Calu3 (cell line): ENCODE measurements at regions of chr12 and their contacts with region 1.

Region 1: GRCh38 chr12:78916845-78917480 is 52.4 kb downstream of the SYT1 start:
- DNase-seq: peak; percentile 65
- H3K4me3 Mint-ChIP-seq: no peak overlapping the region
- H3K27ac Mint-ChIP-seq: peak overlapping the region; percentile 83
- H3K4me1 Mint-ChIP-seq: peaks cover 36% of the 10 kb centered on the region
- H3K27me3 Mint-ChIP-seq: no peaks in the 10 kb centered on the region
- CTCF ChIP-seq: no peak

Region 2: GRCh38 chr12:78886719-78887407 is 30.1 kb before region 1 on chr12:
- CTCF ChIA-PET with region 1: no interaction called
- intact Hi-C with region 1: loop called (anchors 1 kb)
- DNase-seq: peak; percentile 33
- H3K4me3 Mint-ChIP-seq: peak overlapping the region; percentile 47
- H3K27ac Mint-ChIP-seq: peak overlapping the region; percentile 98
- H3K4me1 Mint-ChIP-seq: peaks cover 9% of the 10 kb centered on the region
- H3K27me3 Mint-ChIP-seq: no peaks in the 10 kb centered on the region
- CTCF ChIP-seq: no peak